ENCODE measurements at regions of chr5 and their contacts with region 1.

Region 1: GRCh38 chr5:171484460-171484899 is 65.0 kb downstream of the FGF18 start:
- DNase-seq: peak; percentile 22 to 65 (median 44)
- ATAC-seq: no peak
- H3K4me3 ChIP-seq: no peak overlapping the region
- H3K4me3 Mint-ChIP-seq: no peak overlapping the region
- H3K27ac ChIP-seq: no peak overlapping the region
- H3K27ac Mint-ChIP-seq: no peak overlapping the region
- H3K4me1 ChIP-seq: peaks cover 5% of the 10 kb centered on the region
- H3K4me1 Mint-ChIP-seq: peaks cover 5% of the 10 kb centered on the region
- H3K27me3 ChIP-seq: no peaks in the 10 kb centered on the region
- H3K27me3 Mint-ChIP-seq: peaks cover 14% of the 10 kb centered on the region
- CTCF ChIP-seq: peak; percentile 74

Region 2: GRCh38 chr5:171521219-171521633 is 36.7 kb after region 1 on chr5:
- CTCF ChIA-PET with region 1: no interaction called
- POLR2A ChIA-PET with region 1: no interaction called
- intact Hi-C with region 1: no loop called
- DNase-seq: no peak
- ATAC-seq: no peak
- H3K4me3 ChIP-seq: no peak overlapping the region
- H3K4me3 Mint-ChIP-seq: no peak overlapping the region
- H3K27ac ChIP-seq: no peak overlapping the region
- H3K27ac Mint-ChIP-seq: no peak overlapping the region
- H3K4me1 ChIP-seq: no peaks in the 10 kb centered on the region
- H3K4me1 Mint-ChIP-seq: no peaks in the 10 kb centered on the region
- H3K27me3 ChIP-seq: no peaks in the 10 kb centered on the region
- H3K27me3 Mint-ChIP-seq: peaks cover 2% of the 10 kb centered on the region
- CTCF ChIP-seq: no peak

Region 3: GRCh38 chr5:172293054-172293744 is 808.7 kb after region 1 on chr5:
- CTCF ChIA-PET with region 1: interaction called, 3 read pairs
- POLR2A ChIA-PET with region 1: no interaction called
- intact Hi-C with region 1: loop called in 1 of 2 experiments (anchors 2 kb)
- DNase-seq: peak; percentile 16 to 78 (median 53)
- ATAC-seq: peak; percentile 100
- H3K4me3 ChIP-seq: no peak overlapping the region
- H3K4me3 Mint-ChIP-seq: no peak overlapping the region
- H3K27ac ChIP-seq: no peak overlapping the region
- H3K27ac Mint-ChIP-seq: no peak overlapping the region
- H3K4me1 ChIP-seq: no peaks in the 10 kb centered on the region
- H3K4me1 Mint-ChIP-seq: peaks cover 2% of the 10 kb centered on the region
- H3K27me3 ChIP-seq: no peaks in the 10 kb centered on the region
- H3K27me3 Mint-ChIP-seq: peaks cover 3% of the 10 kb centered on the region
- CTCF ChIP-seq: peak; percentile 82